ENCODE measurements at regions of chr3 and their contacts with region 1.

Region 1: DNA sequence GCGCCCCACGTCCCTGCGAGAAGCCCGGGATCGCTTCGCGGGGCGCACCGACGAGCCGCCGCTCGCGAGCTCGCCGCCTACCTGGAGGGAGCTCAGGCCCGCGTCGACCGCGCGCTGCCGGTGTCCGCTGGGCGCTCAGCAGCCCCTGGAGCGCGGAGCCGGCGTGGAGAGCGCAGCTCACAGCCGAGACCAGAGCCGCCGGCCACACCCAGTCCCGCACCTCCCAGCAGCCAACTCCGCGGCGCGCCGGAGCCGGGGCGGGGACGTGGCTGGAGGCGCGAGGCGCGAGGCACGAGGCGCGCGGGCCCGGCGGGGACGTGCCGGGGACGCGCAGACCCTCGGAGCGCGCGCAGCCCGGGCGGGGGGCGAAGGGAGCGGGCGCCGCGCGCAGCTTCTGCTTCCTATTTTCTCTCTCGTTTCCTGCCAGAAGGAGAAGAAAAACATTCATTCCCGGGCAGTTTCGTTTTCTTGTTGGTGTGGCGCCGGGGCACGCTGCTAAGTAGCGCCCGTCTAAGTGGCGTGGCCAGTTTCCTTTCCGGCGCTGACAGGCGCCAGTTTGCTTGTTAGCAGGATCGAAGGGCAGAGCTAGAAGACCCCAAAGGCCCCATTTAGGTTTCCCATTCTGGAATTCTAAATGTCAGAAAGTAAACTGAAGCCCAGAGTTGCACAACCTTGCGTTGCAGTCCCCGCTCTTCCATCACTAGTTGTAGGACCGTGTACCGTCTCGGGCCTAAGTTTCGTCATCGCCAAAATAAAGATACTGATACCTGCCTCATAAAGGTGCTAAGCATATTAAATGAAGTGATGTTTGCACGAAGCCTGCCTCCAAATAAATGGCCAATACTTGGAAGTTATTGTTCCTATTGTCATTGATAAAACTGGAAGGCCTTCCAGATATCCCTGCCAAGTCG is at the start of gene GNB4:
- DNase-seq: peak; percentile 77 to 86
- ATAC-seq: peak; percentile 87 to 96 (median 90)
- H3K4me3 ChIP-seq: peak within 1 kb of the TSS; percentile 65 to 89 (median 80)
- H3K27ac ChIP-seq: peak within 1 kb of the TSS; percentile 92 to 97 (median 95)
- H3K4me1 ChIP-seq: peaks cover 0 to 52% (median 45%) of the 10 kb centered on the region in 9 donors
- H3K27me3 ChIP-seq: no peaks in the 10 kb centered on the region
- CTCF ChIP-seq: no peak
- total RNA-seq, gene GNB4: 12.4 to 48.2 (median 13.4) TPM

Region 2: DNA sequence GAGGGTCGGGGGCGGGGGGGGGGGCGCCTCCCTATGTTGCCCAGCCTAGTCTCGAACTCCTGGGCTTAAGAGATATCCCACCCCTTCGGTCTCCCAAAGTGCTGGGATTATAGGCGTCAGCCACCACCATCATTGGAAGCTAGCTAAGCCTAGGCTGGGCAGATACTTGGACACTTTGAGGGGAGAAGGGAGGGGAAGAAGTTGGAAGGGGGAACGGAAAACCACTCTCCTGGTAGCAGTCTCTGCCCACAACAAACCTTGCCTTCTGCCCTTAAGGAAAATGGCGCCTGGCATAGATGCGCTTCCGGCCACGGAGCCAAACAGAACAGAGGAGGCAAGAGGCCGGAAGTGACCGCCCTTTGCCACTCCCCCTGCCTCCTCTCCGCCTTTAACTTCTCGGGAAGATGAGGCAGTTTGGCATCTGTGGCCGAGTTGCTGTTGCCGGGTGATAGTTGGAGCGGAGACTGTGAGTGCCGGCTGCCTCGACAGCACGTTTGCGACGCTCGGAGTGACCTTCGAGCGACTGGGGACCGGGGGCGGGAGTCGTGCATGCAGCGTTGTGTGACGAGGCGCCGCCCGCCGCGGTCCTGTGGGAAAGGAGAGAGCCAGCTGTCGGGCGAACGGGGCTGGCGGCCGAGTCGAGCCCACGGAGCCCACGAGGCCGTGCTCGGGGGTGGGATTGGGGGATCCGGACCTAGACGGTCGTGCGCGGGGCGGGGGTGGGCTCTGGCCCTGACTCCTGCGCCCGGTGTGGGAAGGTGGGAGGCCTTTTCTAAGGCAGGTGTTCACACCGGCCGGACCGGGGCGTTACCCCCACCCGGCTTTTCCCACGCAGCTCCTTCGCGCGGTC is 104.0 kb before region 1 on chr3 and contains the start of gene MFN1:
- intact Hi-C with region 1: no loop called
- DNase-seq: peak; percentile 91 to 96
- ATAC-seq: peak; percentile 98 to 100 (median 99)
- H3K4me3 ChIP-seq: peak within 1 kb of the TSS; percentile 68 to 84 (median 76)
- H3K27ac ChIP-seq: peak within 1 kb of the TSS; percentile 72 to 92 (median 88)
- H3K4me1 ChIP-seq: peaks cover 0 to 30% (median 11%) of the 10 kb centered on the region in 9 donors
- H3K27me3 ChIP-seq: no peaks in the 10 kb centered on the region
- CTCF ChIP-seq: no peak
- total RNA-seq, gene MFN1: 52.0 to 82.1 (median 67.9) TPM

Region 3: DNA sequence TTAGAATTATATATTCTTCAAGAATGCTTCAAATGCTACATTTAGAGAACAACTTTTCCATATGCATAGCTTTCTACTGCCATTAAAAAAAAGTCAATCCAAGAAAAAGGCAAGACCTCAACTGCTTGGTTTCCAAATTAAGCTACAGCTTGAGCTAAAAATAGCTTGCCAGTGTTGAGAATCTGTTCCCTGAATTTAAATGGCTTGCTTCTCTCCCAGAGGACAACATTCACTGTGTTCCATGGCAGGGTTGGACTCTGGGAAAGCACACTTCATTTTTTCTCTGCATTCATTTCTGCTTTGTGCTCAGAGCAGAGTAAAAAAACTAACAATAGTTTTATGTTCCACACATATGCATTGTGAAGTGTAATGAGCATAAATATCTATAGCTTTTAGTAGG is 60.9 kb after region 1 on chr3:
- intact Hi-C with region 1: loop called in 1 of 10 experiments (anchors 10 kb)
- DNase-seq: no peak
- ATAC-seq: peak in 4 of 8 donors; percentile 39 to 70 (median 50)
- H3K4me3 ChIP-seq: no peak overlapping the region
- H3K27ac ChIP-seq: no peak overlapping the region
- H3K4me1 ChIP-seq: peaks cover 0 to 20% (median 0%) of the 10 kb centered on the region in 9 donors
- H3K27me3 ChIP-seq: peaks cover 0 to under 1% (median 0%) of the 10 kb centered on the region in 7 donors
- CTCF ChIP-seq: no peak

Region 4: GRCh38 chr3:179526989-179527391 is 75.5 kb after region 1 on chr3:
- intact Hi-C with region 1: loop called in 4 of 10 experiments (anchors 1 to 2 kb)
- DNase-seq: peak; percentile 22 to 85
- ATAC-seq: peak; percentile 94 to 99 (median 99)
- H3K4me3 ChIP-seq: peak overlapping the region in 7 of 10 donors; percentile 6 to 44 (median 15)
- H3K27ac ChIP-seq: peak overlapping the region; percentile 17 to 84 (median 62)
- H3K4me1 ChIP-seq: peaks cover 4 to 25% (median 20%) of the 10 kb centered on the region in 9 donors
- H3K27me3 ChIP-seq: no peaks in the 10 kb centered on the region
- CTCF ChIP-seq: no peak

Measured in heart right ventricle (tissue), 16 donors.